Activated CD4-positive, alpha-beta T cell treated with anti-CD3 and anti-CD28 coated beads for 36 hours (primary cell): ENCODE measurements at regions of chr20 and their contacts with region 1.

Region 1: DNA sequence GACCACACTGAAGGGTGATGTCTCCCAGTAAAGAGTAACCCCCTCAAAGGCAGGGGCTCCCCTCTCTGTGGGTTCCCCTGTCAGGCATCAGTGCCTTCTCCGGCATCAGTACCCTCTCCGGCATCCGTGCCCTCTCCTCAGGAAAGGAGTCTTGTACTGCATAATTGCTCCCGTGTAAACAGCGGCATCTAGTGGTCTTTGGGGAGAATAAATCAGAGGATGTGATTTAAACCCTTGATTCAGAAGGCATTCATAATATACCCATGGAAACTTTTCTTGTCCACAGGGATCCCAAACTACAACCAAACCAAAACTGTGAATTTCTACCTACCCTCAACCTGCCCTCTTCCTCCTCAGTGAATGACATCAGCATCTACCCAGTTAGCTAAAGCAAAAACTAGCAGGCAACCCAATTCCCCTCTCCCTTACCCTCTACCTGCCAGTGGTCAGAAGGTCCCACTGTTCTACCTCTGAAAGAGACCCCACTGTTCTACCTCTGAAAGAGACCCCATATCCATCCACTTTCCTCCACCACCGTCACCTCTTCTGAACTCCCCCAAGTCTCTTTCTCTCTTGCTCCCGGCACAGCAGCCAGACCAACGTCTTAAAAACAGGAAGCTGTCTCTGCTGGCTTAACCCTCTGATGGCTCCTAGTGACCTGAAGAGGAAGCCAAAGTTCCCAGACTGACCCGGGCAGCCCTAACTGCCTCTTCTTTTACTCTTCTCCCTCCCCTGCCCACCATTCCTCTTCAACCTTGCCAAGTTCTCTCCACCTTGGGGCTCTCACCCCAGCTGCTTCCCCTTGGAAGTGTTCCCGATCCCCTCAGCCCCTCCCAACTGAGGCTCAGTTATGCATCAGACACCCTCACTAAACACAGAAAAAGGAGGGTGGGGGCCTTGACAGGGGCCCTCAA is 27.2 kb downstream of the UBE2V1 start:
- DNase-seq: peak; percentile 58
- ATAC-seq: peak; percentile 92
- H3K4me3 Mint-ChIP-seq: peak overlapping the region; percentile 1
- H3K27ac Mint-ChIP-seq: peak overlapping the region; percentile 51
- H3K4me1 Mint-ChIP-seq: peaks cover 33% of the 10 kb centered on the region
- H3K27me3 Mint-ChIP-seq: no peaks in the 10 kb centered on the region

Region 2: DNA sequence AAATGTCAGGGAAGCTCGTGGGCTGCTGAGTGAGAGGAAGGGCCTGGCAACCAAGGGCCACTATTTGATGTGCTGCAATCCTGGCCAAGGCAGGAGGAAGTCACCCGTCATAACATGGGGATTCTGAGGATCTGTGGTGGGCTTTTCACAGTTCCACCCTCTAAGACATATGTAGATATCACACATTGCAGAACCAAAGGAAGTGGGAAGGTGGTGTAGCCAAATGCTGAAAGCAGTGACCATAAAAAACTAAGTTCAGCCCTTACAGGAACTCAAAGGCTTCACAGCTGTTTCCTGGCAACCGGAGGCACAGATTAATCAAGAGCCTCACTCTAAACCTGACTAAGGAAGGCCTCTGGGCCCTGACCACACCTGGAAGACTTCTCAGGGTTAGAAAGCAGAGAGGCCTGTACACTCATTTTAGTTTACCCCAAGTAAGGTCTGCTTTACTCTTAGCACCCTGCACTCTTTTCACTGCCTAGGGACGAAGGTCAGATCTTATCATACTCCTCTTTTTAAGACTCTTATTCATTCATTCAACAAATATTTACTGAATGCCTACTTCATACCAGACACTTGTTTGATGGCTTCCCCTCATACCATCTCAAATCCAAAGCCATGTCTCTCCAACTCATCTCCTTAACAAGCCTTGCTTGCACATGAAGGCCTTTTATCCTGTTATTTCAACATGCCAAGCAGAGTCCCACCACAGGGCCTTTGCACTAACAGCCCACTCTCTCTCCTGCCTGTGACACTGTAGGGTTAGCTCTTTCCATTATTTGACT is 24.6 kb after region 1 on chr20:
- CTCF ChIA-PET with region 1: interaction called, 17 read pairs
- POLR2A ChIA-PET with region 1: no interaction called
- intact Hi-C with region 1: no loop called
- DNase-seq: peak; percentile 69
- ATAC-seq: peak; percentile 49
- H3K4me3 Mint-ChIP-seq: peak overlapping the region; percentile 93
- H3K27ac Mint-ChIP-seq: peak overlapping the region; percentile 92
- H3K4me1 Mint-ChIP-seq: peaks cover 82% of the 10 kb centered on the region
- H3K27me3 Mint-ChIP-seq: no peaks in the 10 kb centered on the region